ENCODE measurements at regions of chr17 and their contacts with region 1.

Region 1: GRCh38 chr17:1365445-1366039 is 34.5 kb downstream of the YWHAE start:
- DNase-seq: peak; percentile 53
- ATAC-seq: peak; percentile 74
- H3K4me3 Mint-ChIP-seq: no peak overlapping the region
- H3K27ac Mint-ChIP-seq: peak overlapping the region; percentile 77
- H3K4me1 Mint-ChIP-seq: peaks cover 62% of the 10 kb centered on the region
- H3K27me3 Mint-ChIP-seq: no peaks in the 10 kb centered on the region
- CTCF ChIP-seq: peak; percentile 68

Region 2: GRCh38 chr17:1340371-1340770 is 25.2 kb before region 1 on chr17:
- CTCF ChIA-PET with region 1: interaction called, 25 read pairs
- POLR2A ChIA-PET with region 1: no interaction called
- DNase-seq: no peak
- ATAC-seq: no peak
- H3K4me3 Mint-ChIP-seq: no peak overlapping the region
- H3K27ac Mint-ChIP-seq: no peak overlapping the region
- H3K4me1 Mint-ChIP-seq: peaks cover 13% of the 10 kb centered on the region
- H3K27me3 Mint-ChIP-seq: no peaks in the 10 kb centered on the region
- CTCF ChIP-seq: no peak

Region 3: DNA sequence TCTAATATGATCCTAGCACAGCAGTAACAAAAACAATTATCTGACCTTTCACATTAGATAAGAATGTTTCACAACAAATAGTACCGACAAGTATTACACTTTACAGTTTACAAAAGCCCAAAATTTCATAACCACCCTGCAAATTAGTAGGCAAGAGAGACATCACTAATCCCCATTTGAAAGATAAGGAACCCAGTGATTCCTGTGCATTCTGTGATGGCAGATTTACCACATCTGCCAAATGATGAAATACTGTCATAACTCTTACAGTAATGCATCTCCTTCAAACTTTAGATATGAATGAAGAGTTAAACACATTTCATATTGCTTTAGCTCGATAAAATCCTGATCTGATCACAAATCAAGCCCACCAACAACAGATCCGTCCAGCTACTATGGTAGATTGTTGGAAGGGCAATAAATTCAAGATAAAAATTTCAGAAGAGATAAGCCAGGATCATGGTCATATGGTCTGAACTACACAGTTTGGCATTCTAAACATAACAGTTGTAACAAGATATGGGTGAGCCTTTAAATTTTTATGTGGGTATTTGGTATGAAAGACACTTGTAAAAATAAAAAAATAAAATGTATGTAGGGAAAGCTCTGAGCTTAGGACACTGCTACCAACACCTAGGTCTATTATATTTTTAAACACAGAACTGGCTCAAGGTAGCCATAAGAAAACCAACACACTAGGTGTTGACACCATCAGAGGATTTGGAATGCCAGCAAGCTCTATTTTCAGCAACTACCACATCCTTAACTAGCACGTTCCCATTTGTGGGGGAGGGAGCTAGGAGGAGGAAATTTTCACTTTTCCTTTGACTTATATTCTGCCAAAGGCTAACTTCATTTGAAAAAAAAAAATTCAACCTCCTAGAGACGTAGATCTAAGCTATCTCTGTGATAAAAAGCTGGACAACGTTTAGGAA is 25.2 kb after region 1 on chr17:
- CTCF ChIA-PET with region 1: interaction called, 102 read pairs
- POLR2A ChIA-PET with region 1: interaction called, 4 read pairs
- DNase-seq: no peak
- ATAC-seq: no peak
- H3K4me3 Mint-ChIP-seq: no peak overlapping the region
- H3K27ac Mint-ChIP-seq: peak overlapping the region; percentile 51
- H3K4me1 Mint-ChIP-seq: peaks cover 75% of the 10 kb centered on the region
- H3K27me3 Mint-ChIP-seq: no peaks in the 10 kb centered on the region
- CTCF ChIP-seq: no peak

Region 4: GRCh38 chr17:1422907-1423306 is 57.4 kb after region 1 on chr17:
- CTCF ChIA-PET with region 1: interaction called, 13 read pairs
- POLR2A ChIA-PET with region 1: interaction called, 5 read pairs
- DNase-seq: no peak
- ATAC-seq: no peak
- H3K4me3 Mint-ChIP-seq: no peak overlapping the region
- H3K27ac Mint-ChIP-seq: no peak overlapping the region
- H3K4me1 Mint-ChIP-seq: no peaks in the 10 kb centered on the region
- H3K27me3 Mint-ChIP-seq: no peaks in the 10 kb centered on the region
- CTCF ChIP-seq: no peak

Region 5: GRCh38 chr17:1488030-1488863 is 122.7 kb after region 1 on chr17:
- CTCF ChIA-PET with region 1: interaction called, 12 read pairs
- POLR2A ChIA-PET with region 1: no interaction called
- DNase-seq: peak; percentile 81
- ATAC-seq: peak; percentile 4
- H3K4me3 Mint-ChIP-seq: peak overlapping the region; percentile 82
- H3K27ac Mint-ChIP-seq: 0 out of 2 replicates have a peak overlapping the region, but pooled peaks have one; percentile 41
- H3K4me1 Mint-ChIP-seq: peaks cover 36% of the 10 kb centered on the region
- H3K27me3 Mint-ChIP-seq: peaks cover 11% of the 10 kb centered on the region
- CTCF ChIP-seq: no peak

Measured in WTC11 (cell line).